GM12878 (cell line): ENCODE measurements at regions of chr3 and their contacts with region 1.

Region 1: GRCh38 chr3:52444860-52445793 is at the start of gene SEMA3G:
- DNase-seq: no peak
- ATAC-seq: peak; percentile 98
- H3K4me3 ChIP-seq: no peak within 1 kb of the TSS
- H3K27ac ChIP-seq: no peak within 1 kb of the TSS
- H3K4me1 ChIP-seq: no peaks in the 10 kb centered on the region
- H3K27me3 ChIP-seq: no peaks in the 10 kb centered on the region
- CTCF ChIP-seq: peak; percentile 30 to 73 (median 52)
- EP300 ChIP-seq: no peak
- POLR2A ChIP-seq: peak; percentile 71
- RAD21 ChIP-seq: 0 out of 2 replicates have a peak, but pooled peaks have one; percentile 14
- polyA plus RNA-seq, gene SEMA3G: not detected

Region 2: DNA sequence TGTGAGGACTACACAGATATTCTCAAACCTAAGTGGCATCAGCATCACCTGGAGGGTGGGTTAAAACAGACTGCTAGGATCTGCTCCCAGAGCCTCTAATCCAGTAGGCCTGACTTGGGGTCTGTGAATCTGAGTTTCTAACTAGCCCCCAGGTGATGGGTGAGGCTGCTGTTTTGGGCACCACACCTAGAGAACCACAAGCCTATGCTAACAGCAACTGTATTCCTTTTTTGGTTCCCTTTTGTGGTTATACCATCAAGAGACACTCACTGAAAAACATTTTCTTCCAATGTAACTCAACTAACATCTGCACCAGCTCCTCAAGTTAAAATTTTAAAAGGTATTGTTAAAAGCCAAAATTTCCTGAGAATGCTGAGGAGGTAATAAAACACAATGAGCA is 182.7 kb before region 1 on chr3:
- CTCF ChIA-PET with region 1: no interaction called
- POLR2A ChIA-PET with region 1: no interaction called
- RAD21 ChIA-PET with region 1: no interaction called
- SMC1A ChIA-PET with region 1: no interaction called
- in situ Hi-C with region 1: no loop called
- intact Hi-C with region 1: no loop called
- DNase-seq: no peak
- ATAC-seq: no peak; the same call in 2 of the 3 replicates
- H3K4me3 ChIP-seq: no peak overlapping the region
- H3K27ac ChIP-seq: no peak overlapping the region
- H3K4me1 ChIP-seq: peaks cover 5% of the 10 kb centered on the region
- H3K27me3 ChIP-seq: no peaks in the 10 kb centered on the region
- CTCF ChIP-seq: no peak
- EP300 ChIP-seq: no peak
- POLR2A ChIP-seq: no peak
- RAD21 ChIP-seq: no peak

Region 3: DNA sequence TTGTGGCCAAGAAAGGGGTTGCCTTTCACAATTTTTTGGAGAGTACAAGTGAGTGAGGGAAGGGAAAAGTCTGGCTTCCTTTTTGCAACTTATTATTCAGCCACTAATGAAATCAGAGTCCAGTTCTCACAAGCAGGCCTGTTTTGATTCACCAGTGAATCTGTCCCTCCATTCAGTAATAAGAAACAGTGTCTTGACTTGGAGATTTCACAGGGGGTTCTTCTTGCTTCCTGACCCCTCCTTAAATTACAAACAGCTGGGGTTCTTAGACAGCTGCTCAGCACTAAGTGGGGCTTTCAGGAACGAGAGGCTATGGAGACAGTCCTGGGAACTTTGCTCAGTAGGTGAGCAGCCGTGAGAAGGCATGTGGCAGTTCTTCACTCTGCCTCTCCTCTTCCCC is 24.7 kb before region 1 on chr3:
- CTCF ChIA-PET with region 1: interaction called, 147 read pairs
- POLR2A ChIA-PET with region 1: no interaction called
- RAD21 ChIA-PET with region 1: interaction called, 63 read pairs
- SMC1A ChIA-PET with region 1: interaction called, 7 read pairs
- in situ Hi-C with region 1: no loop called
- intact Hi-C with region 1: no loop called
- DNase-seq: no peak
- ATAC-seq: no peak
- H3K4me3 ChIP-seq: no peak overlapping the region
- H3K27ac ChIP-seq: no peak overlapping the region
- H3K4me1 ChIP-seq: no peaks in the 10 kb centered on the region
- H3K27me3 ChIP-seq: no peaks in the 10 kb centered on the region; a peak in 1 of 4 replicates
- CTCF ChIP-seq: no peak
- EP300 ChIP-seq: no peak
- POLR2A ChIP-seq: no peak
- RAD21 ChIP-seq: no peak

Region 4: DNA sequence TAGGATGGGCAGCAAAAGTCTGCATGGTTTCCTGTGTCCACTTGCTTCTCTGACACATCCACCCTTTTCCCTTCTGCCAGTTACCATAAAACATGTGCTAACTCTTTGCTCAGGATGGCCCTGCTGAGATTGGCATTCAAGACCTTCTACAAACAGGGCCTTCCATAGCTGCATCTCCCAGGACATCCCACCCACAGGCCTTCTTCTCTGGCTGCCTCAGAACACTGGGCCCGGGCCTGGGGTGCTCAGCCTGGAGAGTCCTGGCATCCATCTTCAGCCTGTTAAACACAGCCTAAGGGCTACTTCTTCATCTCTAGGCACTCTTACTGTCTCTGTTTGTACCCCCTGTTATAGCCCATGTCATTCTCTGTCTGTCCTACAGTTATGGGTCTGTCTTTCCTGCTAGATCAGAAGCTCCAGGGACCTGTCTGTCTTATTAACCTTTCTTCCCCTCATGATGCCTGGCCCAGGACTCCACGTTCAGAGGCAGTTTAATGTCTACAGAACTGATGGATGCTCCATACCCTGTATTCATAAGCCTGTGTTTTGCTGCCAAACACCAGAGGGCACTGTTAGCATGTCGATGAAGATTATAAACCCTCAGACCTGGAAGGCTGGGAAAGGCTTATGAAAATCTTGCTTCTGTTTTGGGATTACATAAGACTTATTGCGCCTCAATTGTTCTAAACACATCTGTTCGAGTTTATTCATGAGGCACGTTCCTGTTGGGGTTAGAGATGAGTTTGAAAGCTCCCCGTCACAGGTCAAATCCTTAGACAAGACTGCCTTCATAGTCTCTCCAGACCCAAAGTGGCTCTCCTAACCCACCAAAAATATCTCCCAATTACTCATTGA is 16.7 kb before region 1 on chr3:
- CTCF ChIA-PET with region 1: interaction called, 147 read pairs
- POLR2A ChIA-PET with region 1: no interaction called
- RAD21 ChIA-PET with region 1: interaction called, 9 read pairs
- SMC1A ChIA-PET with region 1: interaction called, 14 read pairs
- in situ Hi-C with region 1: no loop called
- intact Hi-C with region 1: loop called (anchors 1 kb)
- DNase-seq: no peak
- ATAC-seq: peak; percentile 95
- H3K4me3 ChIP-seq: no peak overlapping the region
- H3K27ac ChIP-seq: no peak overlapping the region
- H3K4me1 ChIP-seq: no peaks in the 10 kb centered on the region
- H3K27me3 ChIP-seq: no peaks in the 10 kb centered on the region
- CTCF ChIP-seq: peak; percentile 72 to 78 (median 77)
- EP300 ChIP-seq: no peak
- POLR2A ChIP-seq: no peak
- RAD21 ChIP-seq: peak; percentile 74

Region 5: DNA sequence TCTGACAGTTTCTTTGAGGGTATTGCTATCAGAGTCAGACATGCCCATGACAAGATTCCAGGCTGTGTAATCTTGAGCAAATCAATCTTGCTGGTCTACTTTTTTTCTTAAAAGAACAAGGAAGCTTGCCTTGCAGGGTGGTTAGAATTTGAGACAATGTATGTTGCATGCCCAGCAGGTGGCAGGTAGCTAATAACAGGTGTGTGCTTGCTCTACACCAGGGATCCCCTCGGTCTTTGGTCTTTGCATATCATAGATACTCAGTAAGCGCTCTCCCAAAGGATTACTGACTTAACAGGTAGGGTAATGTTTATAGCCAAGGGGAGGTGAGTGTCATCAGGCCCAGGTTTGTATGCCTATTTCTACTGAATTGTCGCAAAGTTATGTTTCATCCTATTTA is 1086.6 kb after region 1 on chr3:
- CTCF ChIA-PET with region 1: no interaction called
- POLR2A ChIA-PET with region 1: no interaction called
- RAD21 ChIA-PET with region 1: no interaction called
- SMC1A ChIA-PET with region 1: no interaction called
- in situ Hi-C with region 1: no loop called
- intact Hi-C with region 1: no loop called
- DNase-seq: no peak
- ATAC-seq: peak; percentile 60
- H3K4me3 ChIP-seq: no peak overlapping the region
- H3K27ac ChIP-seq: no peak overlapping the region
- H3K4me1 ChIP-seq: no peaks in the 10 kb centered on the region
- H3K27me3 ChIP-seq: no peaks in the 10 kb centered on the region
- CTCF ChIP-seq: peak in 1 of 3 experiments; percentile 34; a peak in 1 of 6 replicates
- EP300 ChIP-seq: no peak
- POLR2A ChIP-seq: no peak
- RAD21 ChIP-seq: peak; percentile 25; the same call in 1 of the 2 replicates